Endothelial cell of umbilical vein (primary cell): ENCODE measurements at regions of chr16 and their contacts with region 1.

Region 1: DNA sequence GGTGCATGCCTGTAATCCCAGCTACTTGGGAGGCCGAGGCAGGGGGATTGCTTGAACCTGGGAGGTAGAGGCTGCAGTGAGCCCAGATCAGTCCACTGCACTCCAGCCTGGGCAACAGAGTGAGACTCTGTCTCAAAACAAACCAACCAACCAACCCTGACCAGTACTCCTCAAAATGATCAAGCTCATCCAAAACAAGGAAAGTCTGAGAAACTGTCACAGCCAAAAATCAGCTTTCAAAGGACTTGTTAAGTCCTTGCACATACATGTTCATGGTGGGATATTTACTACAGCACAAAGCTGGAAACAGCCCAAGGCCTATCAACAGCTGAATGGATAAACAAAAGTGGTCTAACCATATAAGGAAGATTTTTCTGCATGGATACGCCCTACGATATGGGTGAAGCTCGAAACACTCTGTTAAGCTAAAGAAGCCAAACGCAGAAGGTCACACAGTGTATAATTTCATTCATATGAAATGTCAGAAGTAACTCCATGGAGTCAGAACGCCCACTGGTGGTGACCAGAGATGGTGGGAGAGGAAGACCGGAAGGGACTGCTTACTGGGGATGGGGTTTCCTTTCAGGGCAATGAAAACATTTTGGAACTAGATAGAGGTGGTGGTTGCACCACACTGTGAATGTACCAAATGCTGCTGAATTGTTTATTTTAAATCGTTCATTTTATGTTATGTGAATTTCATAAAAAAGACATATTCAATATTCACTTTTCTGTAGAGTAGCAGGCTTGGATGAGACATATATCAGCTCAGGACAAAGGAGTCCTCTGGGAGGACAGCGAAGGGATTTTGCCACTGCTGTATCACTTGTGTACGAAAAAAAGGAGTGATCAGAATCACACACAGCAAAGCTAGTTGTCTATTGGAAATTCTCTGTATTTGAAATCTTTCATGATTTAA is 17.7 kb downstream of the CCL17 start:
- DNase-seq: peak; percentile 67
- H3K4me3 ChIP-seq: no peak overlapping the region
- H3K27ac ChIP-seq: no peak overlapping the region
- H3K4me1 ChIP-seq: peaks cover 5% of the 10 kb centered on the region
- H3K27me3 ChIP-seq: no peaks in the 10 kb centered on the region
- CTCF ChIP-seq: peak; percentile 68 to 72
- POLR2A ChIP-seq: no peak

Region 2: GRCh38 chr16:56970934-56971767 is 451.1 kb before region 1 on chr16:
- CTCF ChIA-PET with region 1: no interaction called
- POLR2A ChIA-PET with region 1: no interaction called
- dilution Hi-C with region 1: no loop called
- intact Hi-C with region 1: no loop called
- DNase-seq: no peak
- H3K4me3 ChIP-seq: no peak overlapping the region
- H3K27ac ChIP-seq: no peak overlapping the region
- H3K4me1 ChIP-seq: no peaks in the 10 kb centered on the region
- H3K27me3 ChIP-seq: no peaks in the 10 kb centered on the region
- CTCF ChIP-seq: no peak
- POLR2A ChIP-seq: no peak

Region 3: GRCh38 chr16:57167953-57168352 is 254.3 kb before region 1 on chr16:
- CTCF ChIA-PET with region 1: no interaction called
- POLR2A ChIA-PET with region 1: no interaction called
- dilution Hi-C with region 1: no loop called
- intact Hi-C with region 1: no loop called
- DNase-seq: peak; percentile 83
- H3K4me3 ChIP-seq: no peak overlapping the region
- H3K27ac ChIP-seq: no peak overlapping the region
- H3K4me1 ChIP-seq: no peaks in the 10 kb centered on the region
- H3K27me3 ChIP-seq: no peaks in the 10 kb centered on the region
- CTCF ChIP-seq: peak; percentile 50 to 51
- POLR2A ChIP-seq: no peak

Region 4: DNA sequence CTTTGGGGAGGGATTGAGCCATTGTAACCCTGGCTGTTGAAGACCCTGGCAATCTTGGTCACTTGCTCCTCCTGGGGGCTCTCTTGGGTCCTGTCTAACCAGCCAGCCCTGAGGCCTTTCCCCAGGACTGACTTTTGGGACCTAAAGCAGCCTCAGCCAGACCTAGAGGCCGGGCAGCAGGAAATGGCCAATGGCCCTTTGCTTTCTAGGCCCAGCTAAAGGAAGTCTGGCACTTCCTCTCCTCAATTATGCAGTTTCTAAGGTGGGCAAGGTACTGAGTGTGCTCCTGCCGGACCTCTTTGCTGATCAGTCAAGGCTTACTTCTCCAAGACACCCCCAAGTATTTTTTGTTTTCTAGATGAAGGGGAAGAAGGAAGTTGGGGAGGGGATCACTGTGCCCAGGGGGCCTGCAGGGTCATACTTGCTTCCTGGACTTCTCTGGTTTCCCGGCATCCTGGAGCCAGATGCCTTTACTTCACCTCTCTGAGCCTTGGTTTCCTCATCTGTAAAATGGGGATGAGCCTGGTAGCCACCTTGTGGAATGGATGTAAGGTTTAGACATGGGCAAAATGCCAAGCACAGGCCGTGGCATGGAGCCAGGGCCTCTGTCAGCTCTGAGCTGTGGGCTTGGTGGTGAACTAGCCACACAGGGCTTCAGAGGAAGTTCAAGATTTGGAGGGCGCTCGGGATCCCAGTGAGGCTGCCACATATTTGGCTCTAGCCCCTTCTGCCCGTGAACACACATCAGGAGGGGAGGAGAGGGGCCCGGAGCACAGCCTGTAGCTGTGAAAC is 41.4 kb before region 1 on chr16:
- CTCF ChIA-PET with region 1: interaction called, 11 read pairs
- POLR2A ChIA-PET with region 1: no interaction called
- dilution Hi-C with region 1: no loop called
- intact Hi-C with region 1: loop called (anchors 1 kb)
- DNase-seq: peak; percentile 68
- H3K4me3 ChIP-seq: no peak overlapping the region
- H3K27ac ChIP-seq: no peak overlapping the region
- H3K4me1 ChIP-seq: peaks cover 12% of the 10 kb centered on the region
- H3K27me3 ChIP-seq: no peaks in the 10 kb centered on the region
- CTCF ChIP-seq: no peak
- POLR2A ChIP-seq: no peak

Region 5: DNA sequence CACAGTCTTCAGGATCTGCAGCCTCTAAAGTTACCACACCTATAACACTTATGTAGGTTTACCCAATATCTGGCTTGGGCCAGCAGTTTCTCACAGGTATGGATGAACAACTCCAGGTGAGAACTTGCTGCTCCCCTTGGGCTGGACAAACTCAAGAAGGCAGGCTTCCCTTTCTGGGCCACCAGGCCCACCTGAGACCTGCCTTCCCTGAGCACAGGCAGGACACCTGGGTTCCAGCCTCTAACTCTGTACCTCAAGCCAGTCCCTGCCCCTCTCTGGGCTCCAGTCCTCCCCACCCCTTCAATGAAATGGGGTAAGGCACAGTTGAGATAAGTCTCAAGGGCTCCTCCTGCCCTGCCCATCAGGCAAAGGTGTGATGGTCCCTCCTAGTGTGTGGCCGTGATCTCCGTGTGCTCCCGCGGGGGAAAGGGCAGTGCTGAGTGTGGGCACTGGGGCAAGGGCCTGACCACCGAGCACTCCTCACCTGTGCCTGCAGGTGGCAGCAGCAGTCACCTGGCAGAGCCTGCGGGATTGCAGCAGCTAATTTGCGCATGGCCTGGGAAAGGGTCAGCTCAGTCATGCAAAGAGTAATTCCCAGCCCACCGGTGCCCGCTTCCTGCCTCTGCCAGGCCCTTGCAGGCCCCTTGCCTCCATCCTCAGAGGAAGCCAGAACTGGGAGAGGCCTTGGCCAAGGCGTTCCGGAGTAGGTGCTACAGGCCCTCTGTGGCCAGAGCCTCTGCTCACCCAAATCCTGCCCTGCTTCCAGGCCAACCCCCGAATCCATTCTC is 178.0 kb after region 1 on chr16:
- CTCF ChIA-PET with region 1: no interaction called
- POLR2A ChIA-PET with region 1: no interaction called
- dilution Hi-C with region 1: no loop called
- intact Hi-C with region 1: no loop called
- DNase-seq: peak; percentile 45
- H3K4me3 ChIP-seq: no peak overlapping the region
- H3K27ac ChIP-seq: no peak overlapping the region
- H3K4me1 ChIP-seq: no peaks in the 10 kb centered on the region
- H3K27me3 ChIP-seq: no peaks in the 10 kb centered on the region
- CTCF ChIP-seq: peak; percentile 70 to 90
- POLR2A ChIP-seq: no peak